Thyroid gland (tissue), 4 donors: ENCODE measurements at regions of chr10 and their contacts with region 1.

Region 1: GRCh38 chr10:89213191-89213808 is 6.2 kb upstream of the CH25H start:
- DNase-seq: no peak
- H3K4me3 ChIP-seq: no peak overlapping the region
- H3K27ac ChIP-seq: no peak overlapping the region
- H3K4me1 ChIP-seq: peaks cover 4 to 7% of the 10 kb centered on the region in 2 donors
- H3K27me3 ChIP-seq: no peaks in the 10 kb centered on the region
- CTCF ChIP-seq: peak in 5 of 6 experiments; percentile 38 to 91 (median 61)
- POLR2A ChIP-seq: no peak

Region 2: GRCh38 chr10:88932539-88933256 is 280.6 kb before region 1 on chr10:
- intact Hi-C with region 1: loop called (anchors 5 kb)
- DNase-seq: peak; percentile 69 to 73
- H3K4me3 ChIP-seq: no peak overlapping the region
- H3K27ac ChIP-seq: peak overlapping the region; percentile 28 to 52 (median 38)
- H3K4me1 ChIP-seq: peaks cover 16 to 26% of the 10 kb centered on the region in 2 donors
- H3K27me3 ChIP-seq: no peaks in the 10 kb centered on the region
- CTCF ChIP-seq: peak; percentile 67 to 99 (median 91)
- POLR2A ChIP-seq: no peak

Region 3: DNA sequence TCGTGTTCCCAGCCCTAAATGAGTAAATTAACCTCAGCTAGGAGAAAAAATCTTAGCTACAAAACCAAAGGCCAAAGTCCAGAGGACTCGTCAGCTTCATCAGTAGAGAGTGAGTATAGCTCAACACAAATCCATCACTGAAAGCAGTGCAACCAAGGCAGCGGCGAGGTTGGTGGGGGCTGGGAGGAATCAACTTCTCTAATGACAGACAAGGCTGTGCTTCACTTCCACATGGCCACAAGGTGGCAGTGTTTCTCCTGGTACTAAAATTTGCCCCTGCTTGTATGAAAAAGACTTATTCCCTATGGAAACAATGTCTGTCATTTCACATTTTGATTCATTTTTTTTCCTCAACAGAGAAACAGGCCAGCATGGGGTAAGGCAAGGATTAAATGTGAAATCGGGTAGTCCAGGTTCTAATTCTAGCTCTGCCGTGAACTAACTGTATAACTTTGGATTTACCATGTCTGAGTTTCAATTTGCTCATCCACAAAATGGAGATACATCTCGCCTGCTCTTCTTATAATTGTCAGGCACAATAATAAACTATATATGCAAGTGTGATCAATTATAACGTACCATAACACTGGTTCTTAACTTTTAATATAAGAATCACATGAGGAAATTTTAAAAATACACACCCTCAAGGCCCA is 183.4 kb before region 1 on chr10:
- intact Hi-C with region 1: loop called (anchors 5 kb)
- DNase-seq: peak; percentile 67 to 76
- H3K4me3 ChIP-seq: no peak overlapping the region
- H3K27ac ChIP-seq: no peak overlapping the region
- H3K4me1 ChIP-seq: peaks cover 9 to 13% of the 10 kb centered on the region in 2 donors
- H3K27me3 ChIP-seq: no peaks in the 10 kb centered on the region
- CTCF ChIP-seq: peak; percentile 59 to 89 (median 84)
- POLR2A ChIP-seq: no peak

Region 4: DNA sequence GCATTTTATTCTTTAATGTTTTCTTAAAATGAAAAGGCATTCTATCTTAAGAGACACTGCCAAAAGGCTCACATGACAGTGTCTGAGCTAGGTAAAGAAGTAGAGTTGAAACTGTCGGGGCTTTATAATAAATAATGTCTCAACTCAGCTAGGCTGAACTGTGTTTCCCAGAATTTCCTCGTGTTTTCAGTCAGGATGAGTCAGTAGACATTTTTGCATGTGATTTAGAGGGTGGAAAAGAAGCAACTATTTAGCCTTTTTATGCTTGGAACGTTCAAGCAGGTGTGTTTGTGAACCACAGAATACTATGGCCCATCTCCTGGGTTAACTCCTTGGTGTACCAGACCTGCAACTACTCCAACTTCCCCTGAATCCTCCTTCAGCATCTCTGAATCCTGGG is 61.6 kb after region 1 on chr10:
- intact Hi-C with region 1: no loop called
- DNase-seq: no peak
- H3K4me3 ChIP-seq: no peak overlapping the region
- H3K27ac ChIP-seq: no peak overlapping the region
- H3K4me1 ChIP-seq: peaks cover 9 to 24% of the 10 kb centered on the region in 2 donors
- H3K27me3 ChIP-seq: no peaks in the 10 kb centered on the region
- CTCF ChIP-seq: no peak
- POLR2A ChIP-seq: no peak

Region 5: GRCh38 chr10:89940076-89940475 is 726.8 kb after region 1 on chr10:
- intact Hi-C with region 1: no loop called
- DNase-seq: no peak
- H3K4me3 ChIP-seq: no peak overlapping the region
- H3K27ac ChIP-seq: no peak overlapping the region
- H3K4me1 ChIP-seq: no peaks in the 10 kb centered on the region
- H3K27me3 ChIP-seq: no peaks in the 10 kb centered on the region
- CTCF ChIP-seq: no peak
- POLR2A ChIP-seq: no peak